Heart right ventricle (tissue), 16 donors: ENCODE measurements at regions of chr7 and their contacts with region 1.

Region 1: DNA sequence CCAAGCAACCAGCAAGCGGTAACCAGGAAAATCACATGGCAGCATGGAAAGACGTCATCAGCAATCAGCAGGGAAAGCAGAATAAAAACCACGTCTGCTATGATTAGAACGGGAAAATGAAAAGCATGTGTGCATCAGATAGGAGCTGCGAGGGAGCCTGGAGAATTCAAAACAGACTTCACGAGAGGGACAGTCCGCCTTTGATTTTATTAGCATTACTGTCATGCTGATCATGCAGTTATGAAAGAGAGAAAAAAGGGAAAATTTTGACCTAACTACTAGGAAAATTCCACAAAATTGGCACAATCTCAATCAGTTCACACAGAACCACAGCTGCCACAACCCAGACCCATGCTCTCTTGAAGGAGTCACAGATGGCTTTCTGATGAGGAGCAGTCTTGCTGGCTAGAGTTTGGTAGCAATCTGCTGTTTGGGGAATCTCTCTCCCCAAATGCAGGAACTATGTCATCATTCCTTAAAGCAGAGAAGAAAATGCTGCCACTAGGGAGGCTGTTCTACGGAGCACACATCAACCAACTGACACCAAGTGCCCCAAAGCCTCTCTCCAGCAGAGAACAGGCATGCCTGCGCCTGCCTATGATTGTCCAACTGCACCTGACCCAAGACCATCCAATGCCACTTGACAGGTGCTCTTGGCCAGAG is 295.9 kb downstream of the TNS3 start:
- DNase-seq: peak in 1 of 2 donors; percentile 22
- ATAC-seq: peak; percentile 27 to 75 (median 47)
- H3K4me3 ChIP-seq: no peak overlapping the region
- H3K27ac ChIP-seq: peak overlapping the region in 9 of 10 donors; percentile 10 to 69 (median 49)
- H3K4me1 ChIP-seq: peaks cover 0 to 26% (median 19%) of the 10 kb centered on the region in 9 donors
- H3K27me3 ChIP-seq: no peaks in the 10 kb centered on the region
- CTCF ChIP-seq: peak in 4 of 9 donors; percentile 18 to 32 (median 26)

Region 2: GRCh38 chr7:47337531-47337930 is 51.5 kb after region 1 on chr7:
- intact Hi-C with region 1: loop called in 1 of 10 experiments (anchors 5 kb)
- DNase-seq: peak; percentile 38 to 42
- ATAC-seq: peak in 7 of 8 donors; percentile 56 to 75 (median 67)
- H3K4me3 ChIP-seq: no peak overlapping the region
- H3K27ac ChIP-seq: peak overlapping the region in 5 of 10 donors; percentile 70 to 82 (median 77)
- H3K4me1 ChIP-seq: peaks cover 0 to 52% (median 30%) of the 10 kb centered on the region in 9 donors
- H3K27me3 ChIP-seq: no peaks in the 10 kb centered on the region
- CTCF ChIP-seq: peak in 6 of 9 donors; percentile 9 to 48 (median 40)

Region 3: DNA sequence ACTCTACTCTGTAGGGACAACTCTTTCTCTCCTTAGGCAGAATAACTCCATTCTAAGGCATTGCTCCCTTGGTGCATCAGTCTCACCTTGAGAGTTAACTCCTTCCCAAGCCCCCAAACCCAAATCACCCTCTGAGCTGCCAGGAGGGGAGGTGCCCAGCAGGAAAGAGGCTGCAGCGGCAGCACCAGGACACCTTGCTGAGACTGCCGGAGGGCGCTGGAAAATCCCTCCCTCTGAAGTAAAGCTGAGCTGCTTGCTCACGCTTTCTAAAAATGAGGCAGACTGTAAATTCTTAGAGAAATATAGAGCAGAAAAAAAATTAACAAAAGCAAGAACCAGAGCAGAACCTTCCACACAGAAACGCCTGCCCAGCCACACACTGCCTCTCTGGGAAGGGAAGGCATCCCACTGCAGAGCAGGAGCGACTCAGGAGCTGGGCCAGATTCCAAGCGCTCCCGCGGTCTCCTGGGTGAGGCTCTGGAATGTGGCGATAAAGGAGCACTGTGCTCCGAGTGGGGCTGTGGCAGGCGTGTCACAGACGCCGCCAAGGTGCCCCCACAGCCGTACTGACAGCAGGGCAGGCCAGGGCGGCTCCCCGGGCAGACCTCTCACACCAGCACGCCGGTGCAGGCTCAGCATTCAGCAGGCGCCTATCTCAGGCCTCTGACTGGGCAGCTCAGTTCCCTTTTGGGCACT is 93.8 kb after region 1 on chr7:
- intact Hi-C with region 1: loop called in 1 of 10 experiments (anchors 10 kb)
- DNase-seq: peak; percentile 79 to 85
- ATAC-seq: peak; percentile 85 to 94 (median 92)
- H3K4me3 ChIP-seq: peak overlapping the region in 4 of 10 donors; percentile 5 to 24 (median 12)
- H3K27ac ChIP-seq: peak overlapping the region; percentile 53 to 90 (median 77)
- H3K4me1 ChIP-seq: peaks cover 5 to 40% (median 31%) of the 10 kb centered on the region in 9 donors
- H3K27me3 ChIP-seq: no peaks in the 10 kb centered on the region
- CTCF ChIP-seq: no peak

Region 4: DNA sequence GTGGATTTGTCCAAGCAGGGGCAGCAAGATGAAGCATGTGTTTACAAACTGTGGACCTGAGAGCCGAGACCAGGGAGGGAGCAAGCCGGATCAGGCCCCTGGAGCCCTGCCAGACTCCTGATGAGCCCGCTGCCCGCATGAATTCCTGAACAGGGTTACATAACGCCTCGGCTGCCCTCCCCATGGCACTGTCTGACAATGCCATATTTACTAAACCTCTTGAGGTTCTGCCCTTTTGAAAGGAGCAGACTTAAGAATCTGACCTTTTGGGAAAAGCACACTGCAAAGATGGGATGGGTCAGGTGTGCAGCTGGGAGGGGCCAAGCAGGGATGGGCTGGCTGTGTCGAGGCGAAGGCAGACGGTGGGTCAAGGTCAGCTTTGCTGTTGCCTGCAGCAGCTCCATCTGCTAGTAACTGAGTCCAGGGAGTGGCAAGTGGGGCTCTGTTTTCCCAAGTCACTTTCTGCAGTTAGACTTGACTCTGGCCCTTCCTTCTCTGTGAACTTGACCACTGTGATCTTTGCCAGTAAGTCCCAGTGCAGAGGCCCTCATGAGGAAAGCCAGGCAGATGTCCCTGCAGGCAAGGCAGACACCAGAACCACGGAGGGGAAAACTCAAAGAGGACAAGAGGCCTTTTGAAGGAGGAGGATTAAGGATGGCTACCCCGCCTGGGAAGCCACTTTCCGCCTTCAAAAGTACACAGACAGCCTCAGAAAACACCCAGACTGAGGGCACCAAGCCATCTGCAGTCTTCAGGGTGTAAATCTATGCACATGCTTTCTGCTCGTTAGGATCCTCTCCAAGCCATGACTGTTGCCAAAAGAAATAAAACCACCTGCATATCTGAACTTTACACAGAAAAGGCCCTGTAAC is 120.2 kb after region 1 on chr7:
- intact Hi-C with region 1: loop called in 1 of 10 experiments (anchors 10 kb)
- DNase-seq: peak; percentile 65 to 77
- ATAC-seq: peak; percentile 50 to 92 (median 78)
- H3K4me3 ChIP-seq: no peak overlapping the region
- H3K27ac ChIP-seq: peak overlapping the region in 8 of 10 donors; percentile 9 to 67 (median 62)
- H3K4me1 ChIP-seq: peaks cover 12 to 27% (median 17%) of the 10 kb centered on the region in 9 donors
- H3K27me3 ChIP-seq: no peaks in the 10 kb centered on the region
- CTCF ChIP-seq: no peak